K562 (cell line): ENCODE measurements at regions of chr4 and their contacts with region 1.

Region 1: DNA sequence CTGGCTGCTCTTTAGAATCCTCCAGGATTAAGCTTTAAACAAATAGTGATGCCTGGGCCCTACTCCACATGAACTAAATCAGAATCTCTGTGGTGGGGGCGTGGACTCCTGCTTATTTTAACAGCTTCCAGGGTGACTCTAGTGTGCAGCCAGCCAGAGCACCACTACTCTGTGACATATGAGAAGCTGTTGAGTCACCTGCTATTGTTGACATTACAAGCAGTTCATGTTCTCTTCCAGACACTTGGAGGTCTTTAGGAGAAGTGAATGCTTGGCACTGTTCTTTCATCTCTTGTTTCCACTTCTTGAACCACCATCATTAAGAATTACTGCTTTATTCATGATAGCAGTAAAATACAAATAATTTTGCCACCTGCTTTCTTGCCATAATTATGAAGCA is 426 bp upstream of the C4orf51 start:
- DNase-seq: no peak
- ATAC-seq: no peak
- H3K4me3 ChIP-seq: no peak overlapping the region
- H3K27ac ChIP-seq: no peak overlapping the region
- H3K4me1 ChIP-seq: no peaks in the 10 kb centered on the region; a peak in 1 of 5 replicates
- H3K27me3 ChIP-seq: no peaks in the 10 kb centered on the region
- CTCF ChIP-seq: no peak
- EP300 ChIP-seq: no peak
- POLR2A ChIP-seq: no peak
- RAD21 ChIP-seq: no peak

Region 2: DNA sequence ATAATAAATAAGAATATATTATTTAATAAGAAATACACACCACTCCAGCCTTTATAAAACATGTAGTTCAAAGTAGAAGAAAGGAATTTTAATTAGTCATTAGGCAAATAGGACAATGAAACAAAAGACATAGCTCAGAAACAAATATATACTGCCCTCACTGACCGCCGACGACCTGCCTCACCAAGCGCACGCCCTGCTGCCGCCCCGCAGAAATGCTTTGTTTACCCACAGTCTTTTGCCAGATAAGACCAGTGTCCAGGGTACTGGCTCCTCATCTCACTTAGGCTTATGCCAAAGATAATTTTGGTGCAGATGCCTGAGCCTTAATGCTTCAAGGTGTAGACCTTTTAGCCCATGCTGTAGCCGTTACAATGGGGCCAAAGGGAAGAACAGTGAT is 834.1 kb before region 1 on chr4:
- CTCF ChIA-PET with region 1: no interaction called
- POLR2A ChIA-PET with region 1: no interaction called
- in situ Hi-C with region 1: loop called (anchors 10 kb)
- intact Hi-C with region 1: no loop called
- DNase-seq: no peak
- ATAC-seq: no peak
- H3K4me3 ChIP-seq: no peak overlapping the region
- H3K27ac ChIP-seq: no peak overlapping the region
- H3K4me1 ChIP-seq: no peaks in the 10 kb centered on the region
- H3K27me3 ChIP-seq: no peaks in the 10 kb centered on the region
- CTCF ChIP-seq: no peak
- EP300 ChIP-seq: no peak
- POLR2A ChIP-seq: no peak
- RAD21 ChIP-seq: no peak